Heart left ventricle (tissue), 16 donors: ENCODE measurements at regions of chr9 and their contacts with region 1.

Region 1: DNA sequence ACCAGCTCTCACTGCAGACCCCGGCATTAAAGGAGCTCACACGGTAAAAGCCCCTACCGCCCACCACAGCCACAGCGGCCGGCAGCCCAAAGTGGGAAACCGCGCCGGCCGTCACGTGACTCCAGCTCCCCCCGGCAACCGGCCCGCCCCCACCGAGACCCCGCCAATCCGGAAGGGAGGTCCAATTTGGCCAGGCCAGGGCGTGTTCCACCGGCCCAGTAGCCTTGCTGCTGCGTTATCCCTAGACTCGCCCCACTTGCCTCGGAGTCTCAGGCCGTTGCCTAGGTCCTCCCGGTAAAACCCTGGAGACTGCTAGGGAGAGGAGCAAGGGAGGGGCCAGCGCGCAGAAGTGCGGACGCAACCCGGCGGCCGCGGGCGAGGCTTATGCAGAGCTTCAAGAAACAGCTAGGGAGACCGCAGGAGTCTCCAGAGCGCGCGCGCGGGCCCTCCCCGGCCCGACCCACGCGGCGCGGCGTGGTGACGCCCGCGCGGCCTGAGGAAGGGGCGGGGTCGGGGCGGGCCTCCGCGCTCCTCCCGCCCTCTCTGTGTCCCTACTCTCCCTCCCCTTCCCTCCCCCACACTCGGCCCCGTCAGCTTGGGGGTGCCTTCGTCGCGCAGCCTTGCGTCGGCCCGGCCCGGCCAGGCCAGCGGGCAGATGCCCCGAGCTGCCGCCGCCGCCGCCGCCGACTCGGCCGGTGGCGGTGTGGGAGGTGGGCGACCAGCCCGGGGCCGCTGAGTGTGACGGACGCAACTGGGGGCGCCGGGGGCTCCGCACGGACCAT is at the start of gene RIC1:
- DNase-seq: peak; percentile 93 to 95 (median 93)
- ATAC-seq: peak; percentile 87 to 97 (median 96)
- H3K4me3 ChIP-seq: peak within 1 kb of the TSS; percentile 66 to 98 (median 94)
- H3K27ac ChIP-seq: peak within 1 kb of the TSS; percentile 87 to 99 (median 96)
- H3K4me1 ChIP-seq: peaks cover 0 to 79% (median 33%) of the 10 kb centered on the region in 12 donors
- H3K27me3 ChIP-seq: no peaks in the 10 kb centered on the region
- CTCF ChIP-seq: peak in 6 of 12 donors; percentile 8 to 24 (median 20)
- POLR2A ChIP-seq: peak; percentile 87 to 98
- total RNA-seq, gene RIC1: 7.0 to 14.4 (median 9.7) TPM

Region 2: DNA sequence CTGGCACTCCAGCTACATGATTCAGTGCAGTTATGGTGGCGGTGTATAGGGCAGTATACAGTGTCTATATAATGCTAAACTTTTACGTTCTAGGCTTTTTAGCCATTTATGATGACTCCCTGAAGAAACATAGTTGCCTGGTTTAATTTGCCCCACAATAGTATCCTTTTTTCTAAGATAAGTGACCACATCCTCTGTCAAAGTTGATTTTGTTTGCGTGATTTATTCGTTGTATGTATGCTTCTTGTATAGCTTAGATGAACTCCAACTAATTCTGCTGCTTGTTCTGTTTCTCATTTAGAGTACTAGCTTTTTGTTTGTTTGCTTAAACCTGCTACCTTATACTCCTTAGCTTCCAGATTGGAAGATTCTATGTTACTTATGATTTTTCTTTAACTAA is 120.6 kb after region 1 on chr9:
- intact Hi-C with region 1: loop called in 3 of 10 experiments (anchors 10 kb)
- DNase-seq: no peak
- ATAC-seq: no peak
- H3K4me3 ChIP-seq: no peak overlapping the region
- H3K27ac ChIP-seq: no peak overlapping the region
- H3K4me1 ChIP-seq: no peaks in the 10 kb centered on the region
- H3K27me3 ChIP-seq: no peaks in the 10 kb centered on the region
- CTCF ChIP-seq: no peak
- POLR2A ChIP-seq: no peak

Region 3: GRCh38 chr9:5813836-5814235 is 185.1 kb after region 1 on chr9:
- intact Hi-C with region 1: no loop called
- DNase-seq: no peak
- ATAC-seq: no peak
- H3K4me3 ChIP-seq: no peak overlapping the region
- H3K27ac ChIP-seq: no peak overlapping the region
- H3K4me1 ChIP-seq: no peaks in the 10 kb centered on the region
- H3K27me3 ChIP-seq: no peaks in the 10 kb centered on the region
- CTCF ChIP-seq: no peak
- POLR2A ChIP-seq: no peak

Region 4: GRCh38 chr9:5832543-5833529 is 204.1 kb after region 1 on chr9 and contains the start of gene ERMP1:
- intact Hi-C with region 1: loop called in 3 of 10 experiments (anchors 2 to 10 kb)
- DNase-seq: peak; percentile 87 to 93 (median 91)
- ATAC-seq: peak; percentile 85 to 96 (median 94)
- H3K4me3 ChIP-seq: peak within 1 kb of the TSS; percentile 66 to 98 (median 84)
- H3K27ac ChIP-seq: peak within 1 kb of the TSS in 11 of 12 donors; percentile 50 to 84 (median 73)
- H3K4me1 ChIP-seq: peaks cover 0 to 32% (median 18%) of the 10 kb centered on the region in 12 donors
- H3K27me3 ChIP-seq: no peaks in the 10 kb centered on the region
- CTCF ChIP-seq: peak; percentile 79 to 98 (median 89)
- POLR2A ChIP-seq: peak in 1 of 2 donors; percentile 61
- total RNA-seq, gene ERMP1: 10.9 to 28.7 (median 21.9) TPM

Region 5: GRCh38 chr9:6015278-6016157 is 386.8 kb after region 1 on chr9 and contains the start of gene RANBP6:
- intact Hi-C with region 1: loop called in 1 of 10 experiments (anchors 5 kb)
- DNase-seq: peak; percentile 92 to 95 (median 93)
- ATAC-seq: peak; percentile 99 to 100 (median 100)
- H3K4me3 ChIP-seq: peak within 1 kb of the TSS; percentile 59 to 82 (median 74)
- H3K27ac ChIP-seq: peak within 1 kb of the TSS in 11 of 12 donors; percentile 73 to 91 (median 82)
- H3K4me1 ChIP-seq: peaks cover 0 to 40% (median 28%) of the 10 kb centered on the region in 12 donors
- H3K27me3 ChIP-seq: no peaks in the 10 kb centered on the region
- CTCF ChIP-seq: peak in 1 of 12 donors; percentile 16
- POLR2A ChIP-seq: peak in 1 of 2 donors; percentile 48
- total RNA-seq, gene RANBP6: 17.1 to 65.5 (median 24.1) TPM

Region 6: GRCh38 chr9:6681147-6681956 is 1052.6 kb after region 1 on chr9:
- intact Hi-C with region 1: loop called in 2 of 10 experiments (anchors 5 kb)
- DNase-seq: peak; percentile 96 to 99 (median 98)
- ATAC-seq: peak; percentile 98 to 99 (median 99)
- H3K4me3 ChIP-seq: peak overlapping the region; percentile 41 to 81 (median 66)
- H3K27ac ChIP-seq: peak overlapping the region; percentile 77 to 100 (median 95)
- H3K4me1 ChIP-seq: peaks cover 0 to 29% (median 10%) of the 10 kb centered on the region in 12 donors
- H3K27me3 ChIP-seq: no peaks in the 10 kb centered on the region
- CTCF ChIP-seq: peak in 1 of 12 donors; percentile 6
- POLR2A ChIP-seq: peak in 1 of 2 donors; percentile 69